Dorsolateral prefrontal cortex (tissue), 120 donors: ENCODE measurements at regions of chr6 and their contacts with region 1.

Region 1: DNA sequence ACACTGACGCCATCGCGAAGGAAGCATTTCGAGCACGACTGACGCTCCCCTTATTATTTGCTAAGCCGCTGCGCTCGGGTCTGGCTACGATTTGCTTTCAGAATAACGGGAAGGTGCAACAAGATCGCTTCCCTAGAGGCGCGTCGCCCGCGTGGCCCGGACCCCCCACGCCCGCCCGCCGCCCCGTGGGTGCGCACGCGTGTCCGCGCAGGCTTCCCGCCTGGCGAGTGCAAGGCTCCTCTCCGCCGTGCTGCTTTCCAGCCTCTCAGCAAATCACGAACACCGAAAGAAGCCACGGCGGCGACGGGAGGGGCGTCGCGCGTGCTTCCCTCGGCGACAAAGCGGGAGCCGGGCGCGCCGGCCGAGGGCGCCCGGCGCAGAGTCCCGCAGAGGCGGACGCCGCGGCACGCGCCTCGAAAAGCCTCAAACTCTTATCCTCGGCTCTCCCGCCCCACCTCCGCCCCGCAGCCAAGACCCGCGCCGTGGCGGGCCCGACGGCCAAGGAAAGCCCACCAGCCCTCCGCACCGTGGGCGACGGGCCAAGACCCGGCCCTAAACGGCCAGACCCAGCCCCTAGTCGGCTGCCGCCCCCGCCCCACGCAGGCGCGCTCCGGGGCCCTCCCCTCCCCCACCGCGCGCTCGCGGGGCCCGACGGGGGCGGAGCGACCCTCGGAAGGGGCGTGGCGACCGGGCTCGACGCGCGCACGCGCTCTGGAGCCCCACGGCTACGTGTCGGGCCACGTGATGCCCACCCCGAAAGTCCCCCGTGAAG is 987 bp upstream of the QKI start:
- DNase-seq: peak; percentile 78 to 90 (median 83)
- H3K4me3 ChIP-seq: peak overlapping the region; percentile 54 to 97 (median 79)
- H3K27ac ChIP-seq: peak overlapping the region; percentile 91 to 100 (median 99)
- H3K27me3 ChIP-seq: no peaks in the 10 kb centered on the region
- CTCF ChIP-seq: peak in 29 of 56 donors; percentile 7 to 49 (median 23)

Region 2: GRCh38 chr6:162856885-162857284 is 556.6 kb before region 1 on chr6:
- intact Hi-C with region 1: loop called (anchors 5 kb)
- DNase-seq: peak in 7 of 10 donors; percentile 14 to 81 (median 64)
- H3K4me3 ChIP-seq: peak overlapping the region in 56 of 59 donors; percentile 17 to 67 (median 42)
- H3K27ac ChIP-seq: peak overlapping the region; percentile 72 to 98 (median 93)
- H3K27me3 ChIP-seq: no peaks in the 10 kb centered on the region
- CTCF ChIP-seq: peak; percentile 71 to 92 (median 84)

Region 3: DNA sequence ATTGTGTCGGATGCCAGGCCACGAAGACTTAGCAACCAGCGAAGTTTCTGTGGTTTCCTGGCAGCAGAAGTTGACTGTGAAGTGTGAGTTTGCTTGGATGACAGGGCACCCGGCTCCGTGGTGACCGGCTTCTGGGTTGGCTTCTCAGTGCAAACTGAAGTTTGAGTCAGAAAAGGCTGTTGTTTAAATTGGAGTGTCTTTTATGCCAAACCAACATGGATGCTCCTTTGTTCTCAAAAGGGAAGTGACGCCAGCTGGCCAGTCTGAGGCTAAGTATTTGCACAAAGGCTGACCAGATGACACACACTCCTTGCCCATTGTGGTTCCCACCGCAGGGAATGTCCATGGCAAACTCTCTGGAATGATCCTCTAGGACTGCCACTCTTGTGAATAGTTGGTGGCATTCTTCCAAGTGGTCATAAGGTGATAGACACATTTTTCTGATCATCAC is 163.9 kb before region 1 on chr6:
- intact Hi-C with region 1: loop called in 1 of 2 experiments (anchors 2 kb)
- DNase-seq: peak in 4 of 10 donors; percentile 34 to 70 (median 56)
- H3K4me3 ChIP-seq: no peak overlapping the region
- H3K27ac ChIP-seq: peak overlapping the region; percentile 77 to 100 (median 98)
- H3K27me3 ChIP-seq: no peaks in the 10 kb centered on the region
- CTCF ChIP-seq: no peak

Region 4: DNA sequence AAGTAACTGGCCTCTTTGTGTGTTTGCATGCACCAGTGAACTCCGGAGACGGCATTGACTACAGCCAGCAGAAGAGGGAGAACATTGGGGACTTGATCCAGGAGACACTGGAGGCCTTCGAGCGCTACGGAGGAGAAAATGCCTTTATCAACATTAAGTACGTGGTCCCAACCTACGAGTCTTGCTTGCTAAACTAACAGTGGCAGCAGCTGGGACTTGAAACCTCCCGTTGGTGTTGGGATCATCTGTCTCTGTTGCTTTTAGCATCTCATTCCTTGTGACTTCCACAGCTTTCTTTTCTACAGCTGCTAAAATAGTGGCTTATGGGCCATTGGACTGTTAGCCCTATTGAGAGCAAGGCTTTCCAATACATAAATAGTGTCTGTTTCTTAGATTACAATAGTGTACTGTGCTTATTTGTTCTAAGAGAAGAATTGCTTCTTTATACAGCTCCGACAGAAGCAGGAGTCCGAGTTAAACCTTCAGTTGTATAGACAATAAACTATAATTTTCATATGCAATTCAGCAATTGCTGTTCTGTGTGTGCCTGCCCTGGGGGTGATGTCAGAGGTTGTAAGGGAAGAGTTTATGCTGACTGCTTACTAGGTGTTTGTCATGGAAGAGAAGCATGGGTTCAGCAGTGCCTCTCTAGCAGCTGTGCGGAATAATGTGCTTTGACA is 98.6 kb before region 1 on chr6:
- intact Hi-C with region 1: loop called in 1 of 2 experiments (anchors 1 kb)
- DNase-seq: peak in 2 of 10 donors; percentile 49 to 60
- H3K4me3 ChIP-seq: peak overlapping the region in 31 of 59 donors; percentile 1 to 48 (median 24)
- H3K27ac ChIP-seq: peak overlapping the region; percentile 62 to 100 (median 97)
- H3K27me3 ChIP-seq: no peaks in the 10 kb centered on the region
- CTCF ChIP-seq: peak in 4 of 56 donors; percentile 5 to 19 (median 14)

Region 5: GRCh38 chr6:163355426-163355991 is 58.0 kb before region 1 on chr6:
- intact Hi-C with region 1: loop called in 1 of 2 experiments (anchors 1 kb)
- DNase-seq: peak in 7 of 10 donors; percentile 65 to 81 (median 74)
- H3K4me3 ChIP-seq: peak overlapping the region in 41 of 59 donors; percentile 1 to 48 (median 26)
- H3K27ac ChIP-seq: peak overlapping the region; percentile 51 to 100 (median 97)
- H3K27me3 ChIP-seq: no peaks in the 10 kb centered on the region
- CTCF ChIP-seq: peak in 2 of 56 donors; percentile 10 to 14

Region 6: GRCh38 chr6:164106345-164106769 is 692.8 kb after region 1 on chr6:
- intact Hi-C with region 1: loop called in 1 of 2 experiments (anchors 10 kb)
- DNase-seq: peak in 7 of 10 donors; percentile 40 to 69 (median 67)
- H3K4me3 ChIP-seq: peak overlapping the region in 39 of 59 donors; percentile 5 to 49 (median 28)
- H3K27ac ChIP-seq: peak overlapping the region in 49 of 59 donors; percentile 1 to 79 (median 55)
- H3K27me3 ChIP-seq: no peaks in the 10 kb centered on the region
- CTCF ChIP-seq: peak; percentile 29 to 75 (median 63)